Psoas muscle (tissue), 8 donors: ENCODE measurements at regions of chr19 and their contacts with region 1.

Region 1: GRCh38 chr19:47790398-47790814 is 11.9 kb downstream of the SELENOW start:
- DNase-seq: peak; percentile 84 to 90
- ATAC-seq: peak in 3 of 4 donors; percentile 32 to 42 (median 33)
- H3K4me3 ChIP-seq: no peak overlapping the region
- H3K27ac ChIP-seq: no peak overlapping the region
- H3K4me1 ChIP-seq: peaks cover 12% of the 10 kb centered on the region
- H3K27me3 ChIP-seq: no peaks in the 10 kb centered on the region
- CTCF ChIP-seq: peak; percentile 66

Region 2: DNA sequence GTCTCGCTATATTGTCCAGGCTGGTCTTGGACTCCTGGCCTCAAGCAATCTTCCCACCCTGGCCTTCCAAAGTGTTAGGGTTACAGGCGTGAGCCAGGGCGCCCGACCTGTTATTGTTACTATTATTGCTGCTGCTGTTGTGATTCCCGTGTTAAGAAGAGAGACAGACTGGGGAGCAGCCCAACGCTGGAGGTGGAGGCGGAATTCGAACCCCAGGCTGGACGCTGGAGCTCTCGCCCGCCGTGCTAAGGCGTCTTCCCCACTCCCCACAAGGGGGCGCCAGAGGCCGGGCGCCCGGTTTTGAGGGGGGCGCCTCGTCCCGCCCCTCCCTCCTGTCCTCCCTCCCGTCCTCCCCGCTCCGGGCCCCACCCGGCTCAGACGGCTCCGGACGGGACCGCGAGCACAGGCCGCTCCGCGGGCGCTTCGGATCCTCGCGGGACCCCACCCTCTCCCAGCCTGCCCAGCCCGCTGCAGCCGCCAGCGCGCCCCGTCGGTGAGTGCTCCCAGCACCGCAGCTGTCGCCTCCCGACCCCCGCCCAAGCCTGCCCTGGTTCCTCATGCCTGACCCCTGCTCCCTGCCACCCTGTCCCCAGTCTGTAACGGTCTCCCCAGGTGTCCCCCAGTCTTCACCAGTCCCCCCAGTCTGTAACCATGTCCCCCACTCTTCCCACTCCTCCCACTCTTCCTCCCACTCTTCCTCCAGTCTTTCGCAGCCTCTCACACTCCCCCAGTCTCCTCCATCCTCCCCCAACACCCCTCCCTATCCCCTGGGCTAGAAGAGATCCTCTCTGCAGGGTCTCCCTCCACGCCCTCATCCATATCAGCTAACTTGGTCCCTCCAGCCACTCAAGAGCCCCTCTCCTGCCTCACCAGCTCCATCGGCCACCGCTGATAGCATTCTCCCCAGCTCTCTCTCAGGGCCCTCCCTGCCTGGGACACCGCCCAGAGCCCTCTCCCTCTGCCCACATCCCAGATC is 77.1 kb before region 1 on chr19 and contains the start of gene EHD2:
- intact Hi-C with region 1: loop called in 1 of 2 experiments (anchors 5 kb)
- DNase-seq: peak; percentile 77 to 85
- ATAC-seq: peak; percentile 74 to 85 (median 80)
- H3K4me3 ChIP-seq: peak within 1 kb of the TSS; percentile 66
- H3K27ac ChIP-seq: peak within 1 kb of the TSS; percentile 55
- H3K4me1 ChIP-seq: peaks cover 5% of the 10 kb centered on the region
- H3K27me3 ChIP-seq: peaks cover 0 to 51% (median 15%) of the 10 kb centered on the region in 3 donors
- CTCF ChIP-seq: peak; percentile 82
- total RNA-seq, gene EHD2: 27.8 to 46.3 (median 31.7) TPM

Region 3: DNA sequence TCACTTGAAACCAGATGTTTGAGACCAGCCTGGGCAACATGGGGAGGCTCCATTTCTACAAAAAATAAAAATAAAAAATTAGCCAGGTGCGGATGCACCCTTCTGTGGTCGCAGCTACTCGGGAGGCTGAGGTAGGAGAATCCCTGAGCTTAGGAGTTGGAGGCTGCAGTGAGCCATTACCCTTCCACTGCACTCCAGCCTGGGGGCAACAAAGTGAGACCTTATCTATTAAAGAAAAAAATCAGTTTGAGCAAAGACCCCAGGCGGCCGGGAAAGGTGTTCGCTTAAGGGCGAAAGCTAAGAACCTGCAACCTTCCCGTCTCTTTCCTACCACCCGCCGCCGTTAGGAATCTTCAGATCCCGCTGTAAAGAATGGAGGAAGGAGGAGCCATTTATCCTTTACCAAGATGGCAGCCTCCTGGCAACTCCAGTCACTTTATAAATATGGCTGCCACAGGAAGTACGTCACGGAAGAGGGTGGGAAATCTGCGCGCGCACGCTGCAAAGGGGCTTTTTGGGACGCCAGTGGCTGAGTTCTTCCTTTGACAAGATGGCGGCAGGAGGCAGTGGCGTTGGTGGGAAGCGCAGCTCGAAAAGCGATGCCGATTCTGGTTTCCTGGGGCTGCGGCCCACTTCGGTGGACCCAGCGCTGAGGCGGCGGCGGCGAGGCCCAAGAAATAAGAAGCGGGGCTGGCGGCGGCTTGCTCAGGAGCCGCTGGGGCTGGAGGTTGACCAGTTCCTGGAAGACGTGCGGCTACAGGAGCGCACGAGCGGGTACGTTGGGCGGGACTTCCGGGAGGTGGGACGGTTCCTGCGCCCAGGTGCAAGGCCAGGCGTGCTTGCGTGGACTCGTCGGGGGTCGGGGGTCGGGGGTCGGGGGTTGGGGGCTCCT is 45.1 kb before region 1 on chr19 and contains the start of gene NOP53:
- intact Hi-C with region 1: loop called in 1 of 2 experiments (anchors 5 kb)
- DNase-seq: peak; percentile 97 to 98
- ATAC-seq: peak; percentile 84 to 91 (median 86)
- H3K4me3 ChIP-seq: peak within 1 kb of the TSS; percentile 92
- H3K27ac ChIP-seq: peak within 1 kb of the TSS; percentile 98
- H3K4me1 ChIP-seq: peaks cover 30% of the 10 kb centered on the region
- H3K27me3 ChIP-seq: no peaks in the 10 kb centered on the region
- CTCF ChIP-seq: no peak
- total RNA-seq, gene NOP53: 96.3 to 166 (median 127) TPM

Region 4: DNA sequence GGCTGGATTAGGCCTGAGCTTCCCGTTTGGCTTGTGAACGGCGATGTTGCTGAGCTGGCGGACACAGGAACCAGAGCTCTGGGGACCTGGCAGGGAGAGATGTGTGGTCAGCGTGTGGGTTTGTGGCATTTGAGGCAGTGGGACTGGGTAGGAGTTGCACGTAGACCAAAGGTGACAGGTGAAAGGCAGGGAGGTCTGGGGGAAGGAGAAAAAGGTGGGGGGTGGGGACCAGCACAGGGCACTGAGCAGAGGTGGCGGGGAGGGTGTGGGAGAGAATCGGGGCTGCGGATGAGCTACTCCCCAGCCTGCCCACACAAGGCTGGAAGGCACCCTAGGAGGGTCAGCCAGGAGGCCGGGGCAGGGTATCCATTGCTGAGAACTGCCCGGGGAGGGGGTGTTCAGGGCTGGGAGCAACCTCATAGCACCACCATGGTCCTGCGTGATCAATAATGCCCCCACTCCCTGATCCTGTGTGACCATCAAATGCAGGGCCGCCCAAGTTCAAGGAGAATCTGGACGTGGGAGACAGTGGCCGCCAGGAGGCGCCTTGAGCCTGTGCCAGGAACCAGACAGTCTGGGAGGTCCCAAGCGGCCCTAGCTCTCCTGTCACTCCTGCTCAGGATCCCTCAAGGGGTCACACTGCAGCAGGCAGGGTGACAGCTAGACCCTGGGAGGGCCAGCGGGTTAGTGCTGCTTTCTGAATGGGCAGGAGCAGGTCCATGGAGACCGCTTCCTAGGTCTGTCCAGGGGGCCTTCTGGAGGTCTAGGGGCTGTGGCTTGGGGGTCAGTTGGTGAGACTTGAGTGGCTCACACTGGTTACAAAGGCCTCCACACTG is 24.7 kb before region 1 on chr19:
- intact Hi-C with region 1: loop called (anchors 1 kb)
- DNase-seq: peak; percentile 77 to 89
- ATAC-seq: peak; percentile 81 to 90 (median 84)
- H3K4me3 ChIP-seq: no peak overlapping the region
- H3K27ac ChIP-seq: no peak overlapping the region
- H3K4me1 ChIP-seq: no peaks in the 10 kb centered on the region
- H3K27me3 ChIP-seq: no peaks in the 10 kb centered on the region
- CTCF ChIP-seq: peak; percentile 76